ENCODE measurements at regions of chr15 and their contacts with region 1.

Region 1: GRCh38 chr15:82849556-82850512 is 40.4 kb downstream of the WHAMM start:
- DNase-seq: peak; percentile 76 to 81 (median 80)
- ATAC-seq: peak; percentile 96
- H3K4me3 ChIP-seq: no peak overlapping the region
- H3K4me1 ChIP-seq: no peaks in the 10 kb centered on the region
- CTCF ChIP-seq: no peak

Region 2: GRCh38 chr15:82999905-83000671 is 150.3 kb after region 1 on chr15:
- intact Hi-C with region 1: loop called in 1 of 2 experiments (anchors 10 kb)
- DNase-seq: peak in 1 of 3 donors; percentile 14
- ATAC-seq: peak; percentile 83
- H3K4me3 ChIP-seq: no peak overlapping the region
- H3K4me1 ChIP-seq: peaks cover 4% of the 10 kb centered on the region
- CTCF ChIP-seq: no peak